ENCODE measurements at regions of chr9 and their contacts with region 1.

Region 1: GRCh38 chr9:90142580-90142979 is 500.0 kb downstream of the DIRAS2 start:
- DNase-seq: peak in 4 of 5 donors; percentile 42 to 52 (median 49)
- H3K4me3 ChIP-seq: no peak overlapping the region
- H3K4me3 Mint-ChIP-seq: no peak overlapping the region
- H3K27ac ChIP-seq: no peak overlapping the region
- H3K27ac Mint-ChIP-seq: no peak overlapping the region
- H3K4me1 ChIP-seq: peaks cover 5% of the 10 kb centered on the region
- H3K4me1 Mint-ChIP-seq: peaks cover 0 to 6% (median 4%) of the 10 kb centered on the region in 4 donors
- H3K27me3 ChIP-seq: no peaks in the 10 kb centered on the region
- H3K27me3 Mint-ChIP-seq: peaks cover 23 to 32% of the 10 kb centered on the region in 2 donors

Region 2: GRCh38 chr9:89969156-89969675 is 173.4 kb before region 1 on chr9:
- CTCF ChIA-PET with region 1: no interaction called
- POLR2A ChIA-PET with region 1: no interaction called
- intact Hi-C with region 1: no loop called
- DNase-seq: no peak
- H3K4me3 ChIP-seq: no peak overlapping the region
- H3K4me3 Mint-ChIP-seq: no peak overlapping the region
- H3K27ac ChIP-seq: no peak overlapping the region
- H3K27ac Mint-ChIP-seq: no peak overlapping the region
- H3K4me1 ChIP-seq: no peaks in the 10 kb centered on the region
- H3K4me1 Mint-ChIP-seq: no peaks in the 10 kb centered on the region
- H3K27me3 ChIP-seq: no peaks in the 10 kb centered on the region
- H3K27me3 Mint-ChIP-seq: peaks cover 0 to 2% of the 10 kb centered on the region in 2 donors

Region 3: DNA sequence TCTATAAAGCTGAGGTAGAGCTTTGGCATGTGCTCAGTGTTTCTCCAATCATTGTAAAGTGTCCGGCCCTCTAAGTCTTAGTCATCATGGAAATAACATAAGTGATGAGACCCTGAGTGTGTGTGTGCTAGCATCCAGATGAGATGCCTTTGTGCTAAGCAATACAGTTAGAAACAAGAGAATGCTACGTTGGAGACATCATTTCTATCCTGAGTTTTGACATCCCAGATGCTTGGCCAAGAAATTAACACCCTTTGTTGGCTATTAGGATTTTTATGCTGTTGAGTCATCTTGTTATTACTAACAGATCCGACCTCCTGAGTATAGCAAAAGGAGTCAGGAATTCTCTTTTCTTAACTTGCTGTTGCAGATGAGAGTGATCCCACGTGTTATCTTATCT is 29.8 kb before region 1 on chr9:
- CTCF ChIA-PET with region 1: no interaction called
- POLR2A ChIA-PET with region 1: no interaction called
- intact Hi-C with region 1: no loop called
- DNase-seq: no peak
- H3K4me3 ChIP-seq: no peak overlapping the region
- H3K4me3 Mint-ChIP-seq: no peak overlapping the region
- H3K27ac ChIP-seq: no peak overlapping the region
- H3K27ac Mint-ChIP-seq: no peak overlapping the region
- H3K4me1 ChIP-seq: no peaks in the 10 kb centered on the region
- H3K4me1 Mint-ChIP-seq: no peaks in the 10 kb centered on the region
- H3K27me3 ChIP-seq: no peaks in the 10 kb centered on the region
- H3K27me3 Mint-ChIP-seq: peaks cover 0 to 10% of the 10 kb centered on the region in 2 donors

Region 4: DNA sequence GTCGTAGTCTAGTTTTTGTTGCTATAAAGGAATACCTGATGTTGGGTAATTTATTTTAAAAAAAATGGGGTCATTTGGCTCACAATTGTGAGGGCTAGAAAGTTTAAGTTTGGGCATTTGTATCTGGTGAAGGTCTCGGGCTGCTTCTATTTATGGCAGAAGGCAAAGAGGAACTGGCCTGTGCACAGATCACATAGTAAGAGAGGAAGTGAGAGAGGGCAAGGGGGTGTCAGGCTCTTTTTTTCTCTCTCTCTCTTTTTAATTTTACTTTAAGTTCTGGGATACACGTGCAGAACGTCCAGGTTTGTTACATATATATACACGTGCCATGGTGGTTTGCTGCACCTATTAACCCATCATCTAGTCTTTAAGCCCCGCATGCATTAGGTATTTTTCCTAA is 46.7 kb after region 1 on chr9:
- CTCF ChIA-PET with region 1: interaction called, 12 read pairs
- POLR2A ChIA-PET with region 1: no interaction called
- intact Hi-C with region 1: no loop called
- DNase-seq: no peak
- H3K4me3 ChIP-seq: no peak overlapping the region
- H3K4me3 Mint-ChIP-seq: no peak overlapping the region
- H3K27ac ChIP-seq: no peak overlapping the region
- H3K27ac Mint-ChIP-seq: peak overlapping the region in 1 of 7 donors; percentile 65
- H3K4me1 ChIP-seq: peaks cover 9% of the 10 kb centered on the region
- H3K4me1 Mint-ChIP-seq: peaks cover 17 to 59% (median 24%) of the 10 kb centered on the region in 4 donors
- H3K27me3 ChIP-seq: no peaks in the 10 kb centered on the region
- H3K27me3 Mint-ChIP-seq: peaks cover 9 to 21% of the 10 kb centered on the region in 2 donors

Region 5: GRCh38 chr9:90219548-90220118 is 77.1 kb after region 1 on chr9:
- CTCF ChIA-PET with region 1: interaction called, 5 read pairs
- POLR2A ChIA-PET with region 1: no interaction called
- intact Hi-C with region 1: loop called (anchors 1 kb)
- DNase-seq: peak in 4 of 5 donors; percentile 11 to 21 (median 16)
- H3K4me3 ChIP-seq: no peak overlapping the region
- H3K4me3 Mint-ChIP-seq: no peak overlapping the region
- H3K27ac ChIP-seq: no peak overlapping the region
- H3K27ac Mint-ChIP-seq: no peak overlapping the region
- H3K4me1 ChIP-seq: no peaks in the 10 kb centered on the region
- H3K4me1 Mint-ChIP-seq: peaks cover 0 to 5% (median 2%) of the 10 kb centered on the region in 4 donors
- H3K27me3 ChIP-seq: no peaks in the 10 kb centered on the region
- H3K27me3 Mint-ChIP-seq: peaks cover 0 to 9% of the 10 kb centered on the region in 2 donors

Region 6: GRCh38 chr9:90870621-90871326 is 728.2 kb after region 1 on chr9:
- CTCF ChIA-PET with region 1: interaction called, 5 read pairs
- POLR2A ChIA-PET with region 1: no interaction called
- intact Hi-C with region 1: loop called (anchors 1 kb)
- DNase-seq: peak in 4 of 5 donors; percentile 37 to 42 (median 40)
- H3K4me3 ChIP-seq: no peak overlapping the region
- H3K4me3 Mint-ChIP-seq: no peak overlapping the region
- H3K27ac ChIP-seq: no peak overlapping the region
- H3K27ac Mint-ChIP-seq: no peak overlapping the region
- H3K4me1 ChIP-seq: no peaks in the 10 kb centered on the region
- H3K4me1 Mint-ChIP-seq: peaks cover 0 to 7% (median 0%) of the 10 kb centered on the region in 4 donors
- H3K27me3 ChIP-seq: no peaks in the 10 kb centered on the region
- H3K27me3 Mint-ChIP-seq: peaks cover 7% of the 10 kb centered on the region in 2 donors

Region 7: DNA sequence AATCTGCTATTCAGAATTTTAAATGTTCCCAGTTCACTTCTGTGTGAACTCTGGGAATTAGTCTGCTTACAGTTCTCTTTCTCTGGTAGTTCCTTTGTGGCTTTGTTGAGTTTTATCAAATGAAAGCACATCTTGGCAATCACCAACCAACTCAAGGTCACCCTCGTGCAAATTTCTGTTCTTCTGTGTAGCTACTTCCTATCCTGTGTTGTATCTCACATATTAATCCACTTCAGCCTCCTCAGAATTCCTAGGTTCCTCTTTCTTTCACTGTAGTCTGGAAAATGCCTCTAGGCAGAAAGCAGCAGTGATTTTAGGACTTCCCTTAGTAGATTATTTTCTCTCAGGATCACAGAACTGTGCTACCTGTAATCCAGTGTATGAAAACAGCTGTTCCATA is 1118.8 kb after region 1 on chr9:
- CTCF ChIA-PET with region 1: no interaction called
- POLR2A ChIA-PET with region 1: no interaction called
- intact Hi-C with region 1: no loop called
- DNase-seq: no peak
- H3K4me3 ChIP-seq: no peak overlapping the region
- H3K4me3 Mint-ChIP-seq: no peak overlapping the region
- H3K27ac ChIP-seq: no peak overlapping the region
- H3K27ac Mint-ChIP-seq: peak overlapping the region in 2 of 7 donors; percentile 12 to 66
- H3K4me1 ChIP-seq: no peaks in the 10 kb centered on the region
- H3K4me1 Mint-ChIP-seq: peaks cover 3 to 7% (median 5%) of the 10 kb centered on the region in 4 donors
- H3K27me3 ChIP-seq: no peaks in the 10 kb centered on the region
- H3K27me3 Mint-ChIP-seq: no peaks in the 10 kb centered on the region